ENCODE measurements at regions of chr16 and their contacts with region 1.

Region 1: DNA sequence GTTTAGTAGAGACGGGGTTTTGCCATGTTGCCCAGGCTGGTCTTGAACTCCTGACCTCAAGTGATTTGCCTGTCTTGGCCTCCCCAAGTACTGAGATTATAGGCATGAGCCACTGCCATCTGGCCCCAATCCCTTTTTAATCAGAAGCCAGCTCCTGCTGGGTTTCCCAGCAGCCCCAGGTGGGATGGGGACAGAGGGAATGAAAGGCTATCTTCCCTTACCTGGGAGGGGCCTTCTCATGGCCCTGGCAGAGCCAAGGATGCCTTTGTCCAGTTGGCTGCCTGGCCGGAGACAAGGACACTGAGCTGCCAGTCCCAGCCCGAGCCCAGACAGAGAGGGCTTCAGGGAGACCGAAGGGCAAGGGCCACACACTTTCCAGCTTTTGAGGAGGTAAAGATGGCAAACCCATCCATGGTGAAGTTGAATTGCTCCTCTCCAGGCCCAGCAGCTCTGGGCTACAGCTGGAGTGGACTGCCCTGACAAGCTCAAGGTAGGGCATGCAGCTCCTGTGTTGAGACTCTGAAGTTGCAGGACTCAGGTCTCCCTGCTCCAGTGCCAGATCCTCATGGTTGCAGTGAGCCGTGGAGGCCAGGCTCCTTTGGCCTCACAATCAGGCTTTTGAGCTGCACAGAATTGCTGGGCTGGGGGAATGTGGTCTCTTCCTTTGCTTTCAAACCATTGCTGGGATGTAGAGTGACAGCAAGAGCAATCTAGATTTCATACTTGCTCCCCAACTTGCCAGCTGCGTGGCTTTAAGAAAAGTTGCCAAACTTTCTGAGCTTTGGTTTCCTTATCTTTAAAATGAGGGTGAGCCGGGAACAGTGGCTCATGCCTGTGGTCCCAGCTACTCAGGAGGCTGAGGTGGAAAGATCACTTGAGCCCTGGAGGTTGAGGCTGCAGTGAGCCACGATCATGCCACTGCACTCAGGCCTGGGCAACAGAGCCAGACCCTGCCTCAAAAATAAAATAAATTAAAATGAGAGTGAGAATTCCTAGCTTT is 44.5 kb upstream of the IL34 start:
- DNase-seq: no peak
- H3K4me3 ChIP-seq: no peak overlapping the region
- H3K27ac ChIP-seq: no peak overlapping the region
- H3K4me1 ChIP-seq: no peaks in the 10 kb centered on the region
- H3K27me3 ChIP-seq: 0 out of 7 replicates have a peak, but pooled peaks cover 0 to 2% (median 0%) of the 10 kb centered on the region in 4 experiments
- CTCF ChIP-seq: no peak
- EP300 ChIP-seq: no peak
- POLR2A ChIP-seq: no peak
- RAD21 ChIP-seq: no peak

Region 2: DNA sequence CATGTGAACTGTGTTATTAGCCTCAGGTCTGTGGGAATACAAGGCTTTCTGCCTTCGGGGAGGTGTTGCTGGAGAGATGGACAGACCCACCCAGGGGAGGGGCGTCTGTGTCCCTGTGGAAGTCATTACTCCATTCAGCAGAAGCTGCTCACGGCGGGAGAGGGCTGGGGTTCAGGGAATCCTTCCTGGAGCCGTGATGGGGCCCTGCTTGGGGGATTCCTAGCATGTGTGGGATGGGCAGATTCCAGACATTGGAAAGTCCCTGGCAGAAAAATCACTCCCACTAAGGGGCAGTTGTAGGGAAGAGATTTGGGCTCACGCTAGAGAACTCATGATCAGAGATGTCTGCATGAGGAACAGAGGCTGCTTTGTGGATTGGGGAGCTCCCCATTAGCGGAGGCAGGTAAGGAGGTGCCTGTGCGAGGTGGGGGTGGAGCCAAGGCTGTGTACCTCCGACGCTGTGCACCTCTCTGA is 11.8 kb before region 1 on chr16:
- CTCF ChIA-PET with region 1: interaction called, 4 read pairs
- POLR2A ChIA-PET with region 1: interaction called, 11 read pairs
- DNase-seq: no peak
- H3K4me3 ChIP-seq: no peak overlapping the region
- H3K27ac ChIP-seq: no peak overlapping the region
- H3K4me1 ChIP-seq: peaks cover 2 to 7% (median 3%) of the 10 kb centered on the region in 4 experiments; a peak in 4 of 7 replicates
- H3K27me3 ChIP-seq: no peaks in the 10 kb centered on the region
- CTCF ChIP-seq: no peak
- EP300 ChIP-seq: no peak
- POLR2A ChIP-seq: no peak
- RAD21 ChIP-seq: no peak